PC-9 (cell line): ENCODE measurements at regions of chr3 and their contacts with region 1.

Region 1: DNA sequence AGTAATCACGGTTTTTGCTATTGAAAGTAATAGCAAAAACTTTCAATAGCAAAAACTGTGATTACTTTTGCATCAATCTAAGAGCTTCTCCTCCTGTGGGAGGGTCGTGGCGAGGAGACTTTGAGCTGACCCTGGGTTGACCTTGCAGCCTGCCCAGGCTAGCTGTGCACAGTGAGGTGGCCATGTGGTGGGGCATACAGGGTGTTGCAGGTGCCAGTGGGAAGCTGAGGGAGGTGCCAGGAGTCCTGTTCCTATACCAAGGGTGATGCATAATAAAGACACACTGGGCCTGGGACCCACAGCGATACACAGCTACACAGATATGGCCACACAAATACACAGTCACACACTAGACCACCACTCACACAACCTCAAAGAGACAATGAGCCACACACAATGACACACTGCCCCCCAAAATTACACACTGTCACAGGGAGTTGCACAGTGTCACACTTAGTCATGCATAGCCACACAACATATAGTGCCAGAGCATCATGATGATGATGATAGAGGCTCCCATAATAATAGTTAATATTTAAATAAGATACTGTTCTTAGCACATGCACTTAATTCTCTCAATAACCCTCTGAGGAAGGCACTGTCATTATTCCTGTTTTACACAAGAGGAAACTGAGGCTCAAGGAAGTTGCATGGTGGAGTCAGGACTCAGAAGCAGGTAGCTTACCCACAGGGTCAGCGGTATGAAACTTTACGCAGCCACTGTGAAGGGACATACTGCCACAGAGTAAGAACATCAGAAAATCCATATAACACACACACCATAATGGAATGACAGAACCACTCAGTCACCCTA is 6.3 kb downstream of the PLCD1 start:
- DNase-seq: no peak
- H3K4me3 ChIP-seq: no peak overlapping the region
- H3K27ac ChIP-seq: no peak overlapping the region
- H3K4me1 ChIP-seq: peaks cover 17% of the 10 kb centered on the region
- H3K27me3 ChIP-seq: no peaks in the 10 kb centered on the region
- CTCF ChIP-seq: no peak

Region 2: DNA sequence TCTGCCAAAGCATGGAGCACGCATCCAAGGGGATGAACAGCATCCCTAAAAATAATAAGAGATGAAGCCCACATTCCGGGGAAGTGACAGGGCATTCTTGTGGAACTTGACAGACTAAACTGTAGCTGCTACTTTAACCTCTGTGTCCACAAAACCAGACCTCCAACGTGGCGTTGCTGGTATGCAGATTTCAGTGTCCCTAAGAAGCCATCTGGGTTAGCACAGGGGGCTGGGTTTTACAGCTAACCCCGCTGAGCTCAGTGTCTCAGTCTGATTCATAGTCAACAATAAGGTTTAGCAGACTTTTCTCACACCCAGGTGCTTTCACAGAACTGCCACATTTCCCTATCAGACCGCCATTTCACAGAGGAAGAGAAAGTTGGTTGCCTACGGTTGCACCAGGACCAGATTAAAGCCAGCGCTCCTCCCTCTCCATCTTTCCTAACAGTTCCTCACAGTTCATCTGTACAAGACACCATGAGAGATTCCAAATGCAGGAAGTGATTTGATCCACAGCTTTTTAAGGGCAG is 223.0 kb before region 1 on chr3:
- CTCF ChIA-PET with region 1: interaction called, 12 read pairs
- POLR2A ChIA-PET with region 1: no interaction called
- intact Hi-C with region 1: no loop called
- DNase-seq: no peak
- H3K4me3 ChIP-seq: no peak overlapping the region
- H3K27ac ChIP-seq: no peak overlapping the region
- H3K4me1 ChIP-seq: no peaks in the 10 kb centered on the region
- H3K27me3 ChIP-seq: no peaks in the 10 kb centered on the region; the same call in 1 of the 2 replicates
- CTCF ChIP-seq: no peak

Region 3: GRCh38 chr3:38458796-38459498 is 435.8 kb after region 1 on chr3:
- CTCF ChIA-PET with region 1: no interaction called
- POLR2A ChIA-PET with region 1: no interaction called
- intact Hi-C with region 1: loop called (anchors 2 kb)
- DNase-seq: peak in 1 of 2 experiments; percentile 63
- H3K4me3 ChIP-seq: no peak overlapping the region
- H3K27ac ChIP-seq: no peak overlapping the region
- H3K4me1 ChIP-seq: peaks cover 8% of the 10 kb centered on the region; the same call in 1 of the 2 replicates
- H3K27me3 ChIP-seq: no peaks in the 10 kb centered on the region
- CTCF ChIP-seq: no peak